ENCODE measurements at regions of chr12 and their contacts with region 1.

Region 1: GRCh38 chr12:25705261-25705660 is 152.2 kb upstream of the LMNTD1 start:
- DNase-seq: no peak
- H3K4me3 ChIP-seq: no peak overlapping the region
- H3K27ac ChIP-seq: no peak overlapping the region
- H3K4me1 ChIP-seq: peaks cover 5% of the 10 kb centered on the region
- H3K27me3 ChIP-seq: no peaks in the 10 kb centered on the region
- CTCF ChIP-seq: no peak
- POLR2A ChIP-seq: no peak

Region 2: GRCh38 chr12:25694072-25694471 is 11.2 kb before region 1 on chr12:
- CTCF ChIA-PET with region 1: interaction called, 17 read pairs
- POLR2A ChIA-PET with region 1: no interaction called
- dilution Hi-C with region 1: no loop called
- intact Hi-C with region 1: no loop called
- DNase-seq: peak; percentile 88
- H3K4me3 ChIP-seq: peak overlapping the region in 1 of 3 experiments; percentile 15
- H3K27ac ChIP-seq: peak overlapping the region; percentile 52
- H3K4me1 ChIP-seq: peaks cover 19% of the 10 kb centered on the region
- H3K27me3 ChIP-seq: no peaks in the 10 kb centered on the region
- CTCF ChIP-seq: no peak
- POLR2A ChIP-seq: no peak